Left colon (tissue), 2 donors: ENCODE measurements at regions of chr4 and their contacts with region 1.

Region 1: DNA sequence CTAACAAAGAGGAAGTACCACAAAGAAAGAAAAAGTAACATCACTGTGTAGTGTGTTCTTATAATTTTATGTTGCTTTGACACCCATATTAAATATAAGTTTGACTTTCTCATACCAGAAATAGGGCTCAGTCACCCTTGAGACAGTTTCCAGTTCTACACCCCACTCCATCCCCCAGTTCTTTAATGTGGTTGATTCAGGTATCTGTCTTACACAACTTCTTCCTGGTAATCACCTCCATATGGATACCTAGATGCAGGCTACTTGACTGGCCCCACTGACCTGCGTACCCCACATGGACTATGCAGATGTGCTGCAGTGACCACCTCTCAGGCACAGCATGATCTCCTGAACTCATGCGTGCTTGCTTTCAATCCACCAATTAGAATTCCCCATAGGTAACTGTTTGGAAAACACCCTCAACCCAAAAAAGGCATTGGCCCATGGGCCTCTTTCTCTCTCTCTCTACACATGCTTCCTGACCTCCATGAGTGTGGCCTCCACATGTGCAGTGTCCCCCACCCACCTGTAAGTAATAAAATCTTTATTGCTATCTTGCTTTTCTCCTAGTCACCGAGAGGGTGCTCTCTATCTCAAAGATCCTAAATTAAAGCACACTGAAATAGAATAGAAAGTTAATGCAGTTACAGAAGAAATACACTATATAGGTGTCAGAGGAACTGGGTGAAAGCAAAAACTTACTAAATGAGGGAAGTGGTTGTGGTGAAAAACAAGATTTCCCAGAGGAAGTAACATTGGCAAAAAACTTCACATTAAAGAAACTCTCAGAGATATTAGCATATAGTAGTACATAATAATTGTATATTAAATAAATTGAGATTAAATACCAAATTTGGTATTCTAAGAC is 98.4 kb downstream of the ZAR1 start:
- DNase-seq: no peak
- ATAC-seq: peak; percentile 74

Region 2: GRCh38 chr4:48103483-48104139 is 484.9 kb before region 1 on chr4:
- intact Hi-C with region 1: no loop called
- DNase-seq: no peak
- ATAC-seq: peak; percentile 63

Region 3: DNA sequence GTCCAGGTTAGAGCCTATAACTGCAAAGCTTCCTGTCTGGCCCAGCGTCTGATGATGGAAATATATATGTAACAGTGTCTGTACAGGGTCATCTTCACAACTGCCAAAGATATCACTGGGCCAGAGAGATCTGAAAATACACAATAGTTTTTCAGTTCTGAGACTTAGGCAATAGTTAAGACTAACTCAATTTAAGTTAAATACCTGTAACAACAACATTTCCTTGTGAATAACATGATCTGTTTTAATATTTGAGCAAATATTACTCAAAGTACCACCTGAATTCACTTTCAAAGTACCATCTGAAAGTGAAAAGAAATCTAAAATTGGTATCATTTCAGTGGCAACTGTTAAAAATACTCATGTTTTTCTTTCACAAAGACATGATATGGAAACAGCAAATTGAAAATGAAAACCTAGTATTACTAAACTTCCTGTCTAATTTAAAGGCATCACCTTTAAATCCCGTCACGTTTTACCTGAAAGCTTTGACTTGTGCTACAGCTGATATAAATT is 88.9 kb before region 1 on chr4:
- intact Hi-C with region 1: no loop called
- DNase-seq: no peak
- ATAC-seq: no peak

Region 4: DNA sequence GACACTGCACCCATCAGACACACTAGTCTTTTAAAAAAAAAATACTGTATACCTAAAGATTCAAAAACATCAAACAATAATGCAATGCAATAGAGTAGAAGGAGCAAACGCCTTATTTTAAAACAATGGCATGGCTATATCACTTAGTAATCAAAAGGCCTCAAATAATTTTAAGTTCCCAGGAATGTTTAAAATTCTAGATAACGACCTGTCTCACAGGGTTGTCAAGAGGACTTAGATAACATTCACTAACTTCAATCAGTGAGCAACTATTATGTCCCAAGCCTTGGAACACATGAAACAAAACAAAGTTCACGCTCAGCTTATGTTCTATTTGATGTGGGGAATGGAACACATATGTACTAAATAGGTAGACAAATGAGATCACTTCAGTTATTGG is 85.1 kb after region 1 on chr4:
- intact Hi-C with region 1: loop called in 1 of 2 experiments (anchors 10 kb)
- DNase-seq: no peak
- ATAC-seq: no peak